Dorsolateral prefrontal cortex (tissue), 120 donors: ENCODE measurements at regions of chr7 and their contacts with region 1.

Region 1: DNA sequence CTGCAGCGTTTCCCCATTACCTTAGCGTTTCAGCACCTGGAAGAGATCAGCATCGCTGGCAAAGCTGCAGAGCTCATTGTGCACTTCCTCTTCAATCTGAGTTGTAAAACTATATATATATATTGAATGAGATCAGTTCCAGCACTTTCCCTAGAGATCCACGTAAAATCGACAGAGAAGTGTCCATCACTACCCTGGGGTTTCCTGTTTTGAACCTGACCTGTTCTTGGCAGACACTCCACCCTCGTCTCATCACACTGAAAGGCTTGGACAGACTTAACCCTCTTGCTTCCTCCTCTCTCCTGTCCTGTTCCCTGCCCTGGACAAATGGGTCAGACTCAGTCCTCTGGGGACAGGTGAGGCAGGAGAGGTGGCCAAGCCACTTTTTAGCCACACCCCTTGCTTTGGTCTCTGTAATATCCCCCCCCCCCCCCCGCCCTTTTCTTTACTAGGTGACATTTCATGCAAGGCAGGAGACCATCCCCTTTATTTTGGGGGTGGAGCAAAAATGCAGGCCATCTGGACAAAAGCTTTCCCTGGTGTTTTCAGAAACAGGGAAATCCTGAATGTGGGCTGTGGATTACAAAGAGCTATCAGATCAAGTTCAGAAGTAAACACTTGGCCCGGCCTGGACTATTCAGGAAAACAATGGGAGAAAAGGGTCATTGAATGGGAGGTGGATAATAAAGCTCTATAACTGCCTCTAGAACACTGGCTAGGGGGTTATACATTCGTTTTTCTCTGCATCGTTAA is 83.7 kb upstream of the KDM7A start:
- DNase-seq: peak in 2 of 10 donors; percentile 44 to 45
- H3K4me3 ChIP-seq: peak overlapping the region in 4 of 59 donors; percentile 3 to 32 (median 6)
- H3K27ac ChIP-seq: peak overlapping the region in 2 of 59 donors; percentile 6
- H3K27me3 ChIP-seq: no peaks in the 10 kb centered on the region
- CTCF ChIP-seq: peak in 1 of 56 donors; percentile 12

Region 2: DNA sequence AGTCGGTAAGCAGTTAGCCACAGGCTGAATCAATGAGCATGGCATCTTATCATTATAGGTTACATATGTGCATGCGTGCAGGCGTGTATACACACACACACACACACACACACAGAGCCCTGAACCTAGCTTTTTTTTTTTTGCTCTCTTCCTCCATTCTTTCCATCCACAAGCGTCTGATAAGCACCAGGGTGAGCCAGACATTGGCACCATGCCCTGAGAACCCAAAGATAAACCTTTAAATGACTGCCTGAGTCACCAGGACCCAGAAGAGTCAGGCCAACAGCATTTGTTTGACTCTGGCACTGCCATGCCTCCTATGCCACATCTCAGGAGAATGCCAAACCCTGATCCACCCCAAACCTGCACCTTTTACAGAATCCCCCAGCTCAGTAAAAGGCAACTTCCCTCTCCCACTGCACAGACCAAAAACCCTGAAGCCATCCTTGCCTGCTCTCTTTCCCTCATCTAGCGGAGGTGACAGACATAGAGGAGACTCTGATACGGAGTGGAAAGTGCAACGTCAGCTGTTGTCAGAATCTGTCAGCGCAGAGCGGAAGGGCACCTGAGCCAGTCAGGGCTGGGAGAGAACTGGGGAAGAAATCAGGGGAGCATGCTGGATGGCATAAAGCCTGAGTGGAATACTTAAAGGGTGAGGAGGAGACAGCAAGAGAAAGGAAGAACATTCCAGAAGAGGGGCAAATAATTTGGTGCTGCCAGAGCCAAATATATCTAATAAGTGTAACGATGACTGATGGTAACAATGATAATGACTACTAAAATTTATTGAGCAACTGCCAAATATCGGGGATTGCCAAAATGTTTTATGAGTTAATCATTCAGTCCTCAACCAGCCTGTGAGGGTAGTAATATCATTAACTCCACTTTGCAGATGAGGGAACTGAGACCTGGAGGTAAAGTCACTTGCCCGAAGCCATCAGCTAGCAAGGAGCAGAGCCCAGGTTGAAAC is 201.0 kb before region 1 on chr7:
- intact Hi-C with region 1: no loop called
- DNase-seq: no peak
- H3K4me3 ChIP-seq: no peak overlapping the region
- H3K27ac ChIP-seq: no peak overlapping the region
- H3K27me3 ChIP-seq: no peaks in the 10 kb centered on the region
- CTCF ChIP-seq: no peak

Region 3: DNA sequence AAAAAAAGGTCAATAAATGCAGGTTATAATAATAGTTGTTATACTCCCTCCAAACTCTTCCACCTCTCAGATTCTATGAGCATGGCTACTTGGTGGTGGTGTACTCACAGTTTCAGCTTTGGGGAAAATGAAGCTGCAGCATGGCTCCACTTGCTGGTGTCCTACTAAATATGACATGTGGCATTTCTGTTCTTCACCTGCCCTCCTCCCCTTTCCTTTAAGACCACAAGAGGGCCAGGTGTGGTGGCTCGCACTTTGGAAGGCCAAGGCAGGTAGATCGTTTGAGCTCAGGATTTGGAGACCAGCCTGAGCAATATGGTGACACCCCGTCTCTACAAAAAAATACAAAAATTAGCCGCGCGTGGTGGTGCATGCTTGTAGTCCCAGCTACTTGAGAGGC is 36.7 kb after region 1 on chr7:
- intact Hi-C with region 1: loop called in 1 of 2 experiments (anchors 5 kb)
- DNase-seq: no peak
- H3K4me3 ChIP-seq: no peak overlapping the region
- H3K27ac ChIP-seq: no peak overlapping the region
- H3K27me3 ChIP-seq: no peaks in the 10 kb centered on the region
- CTCF ChIP-seq: no peak